ENCODE measurements at regions of chr1 and their contacts with region 1.

Region 1: GRCh38 chr1:202184750-202185460 is 8.7 kb upstream of the LGR6 start:
- DNase-seq: peak; percentile 10
- H3K4me3 ChIP-seq: no peak overlapping the region
- H3K27me3 ChIP-seq: peaks cover 25% of the 10 kb centered on the region
- CTCF ChIP-seq: peak; percentile 95

Region 2: DNA sequence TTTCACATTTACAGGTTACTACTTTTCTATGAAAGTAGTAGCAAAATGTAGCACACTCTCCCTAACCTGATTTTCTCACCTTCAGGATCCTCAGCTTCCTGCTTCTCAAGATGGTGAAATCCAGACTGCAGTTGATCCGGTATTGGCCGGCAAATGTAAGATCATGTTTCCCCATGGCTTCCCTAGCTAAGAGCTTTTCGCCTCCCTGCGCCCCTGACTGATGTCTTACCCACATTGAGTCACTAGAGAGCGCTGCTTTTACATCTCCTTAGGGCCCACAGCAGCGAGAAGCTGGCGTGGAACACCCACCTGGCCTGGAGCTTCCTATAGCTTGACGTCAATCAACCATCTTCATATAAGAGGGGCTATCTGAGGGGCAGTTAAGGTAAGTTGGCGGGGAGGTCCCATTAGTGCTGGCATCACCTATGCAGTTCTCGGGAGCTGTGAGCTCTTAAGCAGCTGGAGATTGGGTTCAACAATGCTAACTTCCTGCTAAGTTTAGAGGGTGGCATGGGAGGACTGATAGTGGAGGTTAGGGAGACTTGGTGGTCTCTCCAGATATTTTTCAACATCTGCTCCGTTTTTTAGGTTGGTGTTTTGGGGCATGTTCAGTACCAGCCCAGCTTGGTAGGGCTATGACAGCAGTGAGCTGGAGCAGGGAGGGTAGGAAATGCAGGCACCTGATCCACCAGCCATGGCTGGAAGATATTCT is 30.0 kb before region 1 on chr1:
- CTCF ChIA-PET with region 1: interaction called, 10 read pairs
- POLR2A ChIA-PET with region 1: no interaction called
- DNase-seq: no peak
- H3K4me3 ChIP-seq: no peak overlapping the region
- H3K27me3 ChIP-seq: peaks cover 9% of the 10 kb centered on the region; the same call in 1 of the 2 replicates
- CTCF ChIP-seq: peak; percentile 60

Region 3: GRCh38 chr1:202274611-202275010 is 89.7 kb after region 1 on chr1:
- CTCF ChIA-PET with region 1: interaction called, 16 read pairs
- POLR2A ChIA-PET with region 1: no interaction called
- DNase-seq: no peak
- H3K4me3 ChIP-seq: no peak overlapping the region
- H3K27me3 ChIP-seq: peaks cover 52% of the 10 kb centered on the region
- CTCF ChIP-seq: peak; percentile 51

Region 4: GRCh38 chr1:202291961-202292712 is 107.2 kb after region 1 on chr1:
- CTCF ChIA-PET with region 1: interaction called, 10 read pairs
- POLR2A ChIA-PET with region 1: no interaction called
- DNase-seq: no peak
- H3K4me3 ChIP-seq: no peak overlapping the region
- H3K27me3 ChIP-seq: peaks cover 36% of the 10 kb centered on the region
- CTCF ChIP-seq: no peak

Region 5: GRCh38 chr1:202315576-202316168 is 130.8 kb after region 1 on chr1:
- CTCF ChIA-PET with region 1: interaction called, 206 read pairs
- POLR2A ChIA-PET with region 1: no interaction called
- DNase-seq: no peak
- H3K4me3 ChIP-seq: no peak overlapping the region
- H3K27me3 ChIP-seq: peaks cover 27% of the 10 kb centered on the region
- CTCF ChIP-seq: peak; percentile 99

Region 6: GRCh38 chr1:202329891-202330290 is 145.0 kb after region 1 on chr1:
- CTCF ChIA-PET with region 1: interaction called, 32 read pairs
- POLR2A ChIA-PET with region 1: no interaction called
- DNase-seq: no peak
- H3K4me3 ChIP-seq: no peak overlapping the region
- H3K27me3 ChIP-seq: no peaks in the 10 kb centered on the region
- CTCF ChIP-seq: no peak